ENCODE measurements at regions of chr4 and their contacts with region 1.

Region 1: GRCh38 chr4:159175085-159175988 is 72.5 kb downstream of the RAPGEF2 start:
- DNase-seq: peak; percentile 35 to 81
- ATAC-seq: peak; percentile 81 to 91 (median 87)
- H3K4me3 ChIP-seq: peak overlapping the region in 3 of 10 donors; percentile 4 to 18 (median 8)
- H3K27ac ChIP-seq: peak overlapping the region in 9 of 10 donors; percentile 11 to 81 (median 57)
- H3K4me1 ChIP-seq: peaks cover 11 to 100% (median 92%) of the 10 kb centered on the region in 9 donors
- H3K27me3 ChIP-seq: no peaks in the 10 kb centered on the region
- CTCF ChIP-seq: peak; percentile 56 to 87 (median 82)

Region 2: GRCh38 chr4:158729716-158730559 is 445.4 kb before region 1 on chr4:
- intact Hi-C with region 1: loop called in 8 of 10 experiments (anchors 2 to 10 kb)
- DNase-seq: peak; percentile 41 to 69
- ATAC-seq: peak; percentile 89 to 97 (median 96)
- H3K4me3 ChIP-seq: no peak overlapping the region
- H3K27ac ChIP-seq: no peak overlapping the region
- H3K4me1 ChIP-seq: peaks cover 0 to 8% (median 0%) of the 10 kb centered on the region in 9 donors
- H3K27me3 ChIP-seq: no peaks in the 10 kb centered on the region
- CTCF ChIP-seq: peak; percentile 84 to 99 (median 87)

Region 3: DNA sequence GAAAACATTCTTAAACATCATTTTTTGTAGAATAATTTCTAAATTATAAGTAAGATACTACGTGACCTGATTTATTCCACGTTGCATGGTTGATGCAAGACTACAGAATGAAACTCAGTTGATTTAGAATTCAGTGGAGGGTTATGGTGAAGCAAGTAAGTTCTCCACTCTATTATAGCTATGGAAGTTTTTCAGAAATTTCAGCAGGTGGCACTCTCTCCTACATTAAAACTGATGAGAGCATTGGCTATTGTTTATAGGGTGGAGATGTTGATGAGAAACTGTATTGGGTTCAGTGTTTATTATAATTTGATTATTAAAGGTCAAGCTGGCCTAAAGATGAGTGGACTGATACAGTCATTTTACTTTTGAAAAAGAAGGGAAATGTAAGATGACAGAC is 318.5 kb before region 1 on chr4:
- intact Hi-C with region 1: loop called in 9 of 10 experiments (anchors 1 to 10 kb)
- DNase-seq: no peak
- ATAC-seq: peak in 7 of 8 donors; percentile 29 to 85 (median 76)
- H3K4me3 ChIP-seq: no peak overlapping the region
- H3K27ac ChIP-seq: no peak overlapping the region
- H3K4me1 ChIP-seq: peaks cover 0 to 18% (median 4%) of the 10 kb centered on the region in 9 donors
- H3K27me3 ChIP-seq: no peaks in the 10 kb centered on the region
- CTCF ChIP-seq: peak in 8 of 9 donors; percentile 23 to 75 (median 60)

Region 4: GRCh38 chr4:159016593-159017024 is 158.7 kb before region 1 on chr4:
- intact Hi-C with region 1: loop called in 1 of 10 experiments (anchors 10 kb)
- DNase-seq: no peak
- ATAC-seq: peak in 1 of 8 donors; percentile 16
- H3K4me3 ChIP-seq: peak overlapping the region in 3 of 10 donors; percentile 3 to 9 (median 5)
- H3K27ac ChIP-seq: no peak overlapping the region
- H3K4me1 ChIP-seq: peaks cover 0 to 7% (median 0%) of the 10 kb centered on the region in 9 donors
- H3K27me3 ChIP-seq: no peaks in the 10 kb centered on the region
- CTCF ChIP-seq: no peak

Region 5: GRCh38 chr4:159201168-159201567 is 25.8 kb after region 1 on chr4:
- intact Hi-C with region 1: loop called in 2 of 10 experiments (anchors 1 to 2 kb)
- DNase-seq: no peak
- ATAC-seq: peak in 5 of 8 donors; percentile 32 to 77 (median 46)
- H3K4me3 ChIP-seq: peak overlapping the region in 1 of 10 donors; percentile 19
- H3K27ac ChIP-seq: peak overlapping the region; percentile 20 to 85 (median 66)
- H3K4me1 ChIP-seq: peaks cover 10 to 88% (median 61%) of the 10 kb centered on the region in 9 donors
- H3K27me3 ChIP-seq: no peaks in the 10 kb centered on the region
- CTCF ChIP-seq: no peak